ENCODE measurements at regions of chr9 and their contacts with region 1.

Region 1: GRCh38 chr9:128881901-128882681 is at the starts of genes KYAT1 and LRRC8A:
- DNase-seq: peak; percentile 98
- ATAC-seq: peak; percentile 90
- H3K4me3 Mint-ChIP-seq: peak within 1 kb of the TSS; percentile 94
- H3K27ac Mint-ChIP-seq: peak within 1 kb of the TSS; percentile 84
- H3K4me1 Mint-ChIP-seq: peaks cover 34% of the 10 kb centered on the region
- H3K27me3 Mint-ChIP-seq: no peaks in the 10 kb centered on the region
- CTCF ChIP-seq: no peak
- total RNA-seq, gene KYAT1: 2.0 and 4.3 TPM in 2 replicates
- total RNA-seq, gene LRRC8A: 9.0 and 10.4 TPM in 2 replicates

Region 2: GRCh38 chr9:128504485-128505413 is 377.3 kb before region 1 on chr9 and contains the start of gene GLE1:
- CTCF ChIA-PET with region 1: no interaction called
- POLR2A ChIA-PET with region 1: no interaction called
- intact Hi-C with region 1: loop called (anchors 2 kb)
- DNase-seq: peak; percentile 99
- ATAC-seq: peak; percentile 95
- H3K4me3 Mint-ChIP-seq: peak within 1 kb of the TSS; percentile 99
- H3K27ac Mint-ChIP-seq: peak within 1 kb of the TSS; percentile 98
- H3K4me1 Mint-ChIP-seq: peaks cover 24% of the 10 kb centered on the region
- H3K27me3 Mint-ChIP-seq: no peaks in the 10 kb centered on the region
- CTCF ChIP-seq: no peak
- total RNA-seq, gene GLE1: 28.8 and 31.8 TPM in 2 replicates

Region 3: DNA sequence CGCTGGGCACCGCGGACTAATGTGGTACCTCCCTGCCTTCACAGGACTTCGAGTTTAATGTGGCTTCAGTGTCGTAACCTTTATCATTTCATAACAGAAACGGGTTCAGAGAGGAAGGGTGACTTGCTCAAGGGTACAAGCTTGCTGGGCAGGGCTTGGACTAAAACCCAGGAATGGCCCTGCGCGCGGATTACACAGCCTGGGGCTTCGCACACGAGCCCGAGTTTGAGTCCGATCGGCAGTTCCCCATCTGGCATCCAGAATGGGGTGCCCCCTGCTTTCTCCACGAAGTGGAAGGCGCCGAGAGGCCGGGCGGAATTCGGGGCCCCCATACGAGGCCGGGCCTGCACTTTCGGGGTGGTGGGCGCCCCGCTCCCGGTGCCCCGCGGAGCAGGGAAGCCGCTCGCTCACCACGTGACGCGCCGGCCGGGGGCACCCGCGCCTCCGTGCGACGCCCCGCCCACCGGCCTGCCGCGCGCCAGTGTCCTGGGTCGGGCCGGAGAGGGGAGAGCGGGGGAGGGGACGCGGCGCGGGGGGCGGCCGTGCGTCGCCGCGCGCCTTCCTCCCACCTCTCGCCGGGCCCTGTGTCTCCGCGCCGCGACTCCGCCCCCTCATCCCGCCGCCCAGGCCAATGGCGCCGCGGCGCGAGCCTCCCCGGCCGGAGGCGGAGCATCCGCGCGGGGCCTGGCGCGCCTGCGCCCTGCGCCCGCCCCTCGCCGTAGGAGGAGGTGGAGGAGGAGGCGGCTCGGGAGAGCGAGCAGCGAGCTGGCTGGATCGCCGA is 193.4 kb before region 1 on chr9 and contains the start of gene SET:
- CTCF ChIA-PET with region 1: no interaction called
- POLR2A ChIA-PET with region 1: interaction called, 3 read pairs
- intact Hi-C with region 1: loop called (anchors 5 kb)
- DNase-seq: peak; percentile 97
- ATAC-seq: peak; percentile 81
- H3K4me3 Mint-ChIP-seq: peak within 1 kb of the TSS; percentile 98
- H3K27ac Mint-ChIP-seq: peak within 1 kb of the TSS; percentile 87
- H3K4me1 Mint-ChIP-seq: peaks cover 68% of the 10 kb centered on the region
- H3K27me3 Mint-ChIP-seq: no peaks in the 10 kb centered on the region
- CTCF ChIP-seq: no peak
- total RNA-seq, gene SET: 762 and 801 TPM in 2 replicates

Region 4: GRCh38 chr9:128818099-128818838 is 63.8 kb before region 1 on chr9 and contains the start of gene ENDOG:
- CTCF ChIA-PET with region 1: no interaction called
- POLR2A ChIA-PET with region 1: interaction called, 4 read pairs
- intact Hi-C with region 1: loop called (anchors 1 kb)
- DNase-seq: peak; percentile 98
- ATAC-seq: peak; percentile 95
- H3K4me3 Mint-ChIP-seq: peak within 1 kb of the TSS; percentile 87
- H3K27ac Mint-ChIP-seq: peak within 1 kb of the TSS; percentile 87
- H3K4me1 Mint-ChIP-seq: peaks cover 15% of the 10 kb centered on the region
- H3K27me3 Mint-ChIP-seq: no peaks in the 10 kb centered on the region
- CTCF ChIP-seq: no peak
- total RNA-seq, gene ENDOG: 14.6 and 16.9 TPM in 2 replicates

Region 5: DNA sequence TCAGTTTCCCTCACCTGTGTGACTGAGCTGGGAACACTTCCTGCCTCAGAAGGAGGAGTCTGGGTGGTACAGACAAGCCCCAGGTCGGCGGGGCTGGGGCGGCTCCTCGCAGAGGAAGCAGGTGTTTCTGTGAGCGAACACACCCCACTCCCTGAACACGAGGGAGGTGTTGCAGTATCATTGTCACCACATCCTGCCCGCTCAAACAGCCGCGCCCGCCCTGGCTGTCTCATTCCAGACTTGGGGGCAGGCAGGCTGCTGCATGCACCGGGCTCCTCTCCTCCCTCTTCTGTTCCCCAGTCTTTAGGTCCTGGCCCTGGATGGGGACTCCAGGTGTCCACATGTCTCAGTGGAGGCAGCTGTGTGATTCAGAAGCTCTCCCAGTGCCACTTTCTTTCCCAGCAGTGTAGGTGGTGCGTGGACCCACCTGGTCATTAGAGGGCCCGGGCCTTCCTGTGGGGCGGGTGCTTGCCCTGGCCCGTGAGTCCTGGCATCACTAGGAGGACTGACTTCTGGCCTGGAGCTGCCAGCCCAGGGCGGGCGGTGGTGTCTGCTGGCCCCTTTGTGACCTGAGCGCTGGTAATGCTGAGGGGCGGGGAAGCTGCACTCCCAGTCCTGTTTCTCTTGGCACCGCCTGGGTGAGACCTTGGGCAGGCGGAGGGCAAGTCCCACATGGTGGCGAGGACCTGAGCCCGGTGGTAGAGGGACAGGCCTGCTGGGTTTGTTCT is 20.4 kb after region 1 on chr9:
- CTCF ChIA-PET with region 1: no interaction called
- POLR2A ChIA-PET with region 1: interaction called, 4 read pairs
- intact Hi-C with region 1: loop called (anchors 1 kb)
- DNase-seq: peak; percentile 56
- ATAC-seq: peak; percentile 96
- H3K4me3 Mint-ChIP-seq: peak overlapping the region; percentile 64
- H3K27ac Mint-ChIP-seq: peak overlapping the region; percentile 95
- H3K4me1 Mint-ChIP-seq: peaks cover 48% of the 10 kb centered on the region
- H3K27me3 Mint-ChIP-seq: no peaks in the 10 kb centered on the region
- CTCF ChIP-seq: no peak

Region 6: DNA sequence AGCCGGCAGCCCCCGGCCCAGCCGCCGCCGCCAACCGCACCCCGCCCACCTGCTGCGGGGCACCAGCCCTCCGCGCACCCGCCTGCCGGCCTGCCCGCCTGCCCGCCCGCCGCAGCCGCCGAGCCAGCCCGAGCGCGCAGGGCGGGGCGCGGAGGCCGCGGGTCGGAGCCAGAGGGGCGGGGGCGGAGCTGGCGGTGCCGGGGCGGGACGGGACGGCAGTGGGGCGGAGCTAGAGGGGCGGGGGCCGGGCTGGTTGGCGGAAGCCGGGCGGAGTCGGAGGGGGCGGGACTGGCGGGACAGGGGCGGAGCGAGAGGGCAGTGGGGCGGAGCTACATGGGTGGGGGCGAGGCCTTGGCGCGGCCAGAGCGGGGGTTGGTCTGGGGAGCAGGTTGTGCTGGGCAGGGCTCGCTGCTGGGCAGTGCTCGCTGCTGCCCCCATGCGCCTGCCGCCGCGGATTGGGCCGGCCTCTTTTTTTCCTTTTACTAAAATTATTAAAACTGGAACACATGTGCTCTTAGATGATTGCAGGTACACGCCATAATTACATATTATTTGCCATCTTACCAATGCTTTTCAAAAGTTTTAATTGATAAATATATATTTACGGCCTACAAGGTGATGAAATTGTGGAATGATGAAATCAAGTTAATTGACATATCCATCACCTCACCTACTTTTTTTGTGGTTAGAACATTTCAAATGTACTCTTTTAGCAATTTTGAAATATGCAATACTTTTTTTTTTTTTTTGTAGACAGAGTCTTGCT is 146.3 kb after region 1 on chr9 and contains the start of gene SH3GLB2:
- CTCF ChIA-PET with region 1: no interaction called
- POLR2A ChIA-PET with region 1: interaction called, 5 read pairs
- intact Hi-C with region 1: loop called (anchors 2 kb)
- DNase-seq: peak; percentile 93
- ATAC-seq: peak; percentile 95
- H3K4me3 Mint-ChIP-seq: peak within 1 kb of the TSS; percentile 85
- H3K27ac Mint-ChIP-seq: peak within 1 kb of the TSS; percentile 66
- H3K4me1 Mint-ChIP-seq: peaks cover 19% of the 10 kb centered on the region
- H3K27me3 Mint-ChIP-seq: no peaks in the 10 kb centered on the region
- CTCF ChIP-seq: no peak
- total RNA-seq, gene SH3GLB2: 60.4 and 62.9 TPM in 2 replicates

Measured in activated B cell treated with CpG ODN at 0.5 μM for 24 hours (primary cell).